ENCODE measurements at regions of chr16 and their contacts with region 1.

Region 1: DNA sequence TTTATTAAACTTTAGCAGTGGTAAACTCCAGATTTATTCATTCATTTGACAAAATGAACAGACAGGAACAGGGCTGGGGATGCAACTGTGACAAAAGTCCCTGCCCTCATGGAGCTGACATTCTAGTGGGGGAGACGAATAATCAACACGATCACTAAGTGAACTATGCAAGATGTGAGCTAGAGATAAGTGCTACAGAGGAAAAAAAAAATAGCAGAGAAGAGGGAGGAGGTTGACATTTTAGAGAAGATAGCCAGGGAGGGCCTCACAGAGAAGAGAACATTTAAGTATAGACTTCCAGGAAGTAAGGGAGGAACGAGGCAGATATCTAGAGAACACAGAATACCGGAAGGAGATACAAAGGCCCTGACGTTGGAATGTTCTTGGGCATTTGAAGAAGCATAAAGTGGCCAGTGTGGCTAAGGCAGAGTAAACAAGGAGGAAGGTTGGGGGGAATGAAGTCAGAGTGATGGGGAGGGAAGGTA is 17.9 kb upstream of the AP1G1 start:
- DNase-seq: peak in 2 of 4 experiments; percentile 52 to 58
- ATAC-seq: peak; percentile 63
- H3K4me3 ChIP-seq: no peak overlapping the region
- H3K27ac ChIP-seq: peak overlapping the region; percentile 67; the same call in 2 of the 3 replicates
- H3K4me1 ChIP-seq: no peaks in the 10 kb centered on the region; a peak in 2 of 5 replicates
- H3K27me3 ChIP-seq: no peaks in the 10 kb centered on the region
- CTCF ChIP-seq: no peak
- EP300 ChIP-seq: peak; percentile 51; the same call in 1 of the 2 replicates
- POLR2A ChIP-seq: no peak
- RAD21 ChIP-seq: no peak

Region 2: DNA sequence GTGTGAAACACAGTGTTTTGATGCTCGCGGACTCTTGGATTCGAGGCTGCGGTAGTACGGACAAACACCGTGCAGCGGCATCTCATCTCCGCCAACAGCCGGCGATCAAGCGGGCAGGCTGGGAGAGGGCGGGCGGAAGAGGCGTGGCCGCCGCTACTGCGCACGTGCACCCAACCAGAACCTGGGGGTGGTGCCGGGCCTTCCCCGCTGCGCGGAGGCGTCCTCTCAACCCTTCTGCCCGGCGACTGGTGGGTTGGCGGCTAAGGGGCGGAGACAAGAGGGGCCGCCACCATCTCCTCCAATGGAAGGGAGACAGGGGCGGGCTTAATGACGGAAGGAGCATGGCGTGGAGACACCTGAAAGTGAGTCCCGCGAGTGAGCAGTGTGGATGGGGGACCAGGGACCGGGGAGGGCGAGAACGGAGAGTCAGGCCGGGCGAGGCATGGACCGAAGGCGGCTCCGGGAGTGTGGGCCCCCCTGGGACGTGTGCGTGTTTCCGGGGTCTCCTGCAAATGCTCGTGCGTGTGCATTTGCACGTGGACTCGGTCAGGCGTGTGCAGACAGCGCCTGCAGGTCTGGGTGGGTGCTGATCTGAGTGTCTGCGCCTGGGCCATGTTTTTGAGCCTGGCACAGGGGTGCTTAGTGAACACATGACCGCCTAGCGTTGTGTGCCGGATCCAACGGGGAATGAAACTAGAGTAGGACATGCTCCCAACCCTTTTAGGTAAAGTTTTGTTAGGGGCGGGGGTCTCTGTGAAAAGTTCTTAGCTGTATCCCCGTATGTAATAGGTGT is 182.0 kb after region 1 on chr16 and contains the start of gene DHODH:
- CTCF ChIA-PET with region 1: no interaction called
- POLR2A ChIA-PET with region 1: no interaction called
- in situ Hi-C with region 1: no loop called
- intact Hi-C with region 1: loop called (anchors 5 kb)
- DNase-seq: peak; percentile 98 to 100 (median 99)
- ATAC-seq: peak; percentile 100
- H3K4me3 ChIP-seq: peak within 1 kb of the TSS; percentile 98
- H3K27ac ChIP-seq: peak within 1 kb of the TSS; percentile 71
- H3K4me1 ChIP-seq: peaks cover 13 to 36% of the 10 kb centered on the region in 2 experiments
- H3K27me3 ChIP-seq: peaks cover 0 to 6% of the 10 kb centered on the region in 2 experiments; a peak in 2 of 5 replicates
- CTCF ChIP-seq: peak in 1 of 3 experiments; percentile 18; a peak in 2 of 6 replicates
- EP300 ChIP-seq: no peak
- POLR2A ChIP-seq: peak; percentile 88
- RAD21 ChIP-seq: 0 out of 4 replicates have a peak, but pooled peaks of 1 of the 2 experiments have one; percentile 4
- polyA plus RNA-seq, gene DHODH: 4.3 to 4.9 TPM

Measured in K562 (cell line).